BJ (cell line): ENCODE measurements at regions of chr11 and their contacts with region 1.

Region 1: GRCh38 chr11:10405855-10406592 is 49.0 kb upstream of the AMPD3 start:
- DNase-seq: no peak
- H3K4me3 ChIP-seq: no peak overlapping the region
- H3K27me3 ChIP-seq: no peaks in the 10 kb centered on the region
- CTCF ChIP-seq: peak; percentile 72

Region 2: GRCh38 chr11:10181811-10182210 is 224.2 kb before region 1 on chr11:
- CTCF ChIA-PET with region 1: no interaction called
- POLR2A ChIA-PET with region 1: interaction called, 18 read pairs
- DNase-seq: peak; percentile 35
- H3K4me3 ChIP-seq: no peak overlapping the region
- H3K27me3 ChIP-seq: no peaks in the 10 kb centered on the region
- CTCF ChIP-seq: peak; percentile 21; the same call in 1 of the 2 replicates

Region 3: DNA sequence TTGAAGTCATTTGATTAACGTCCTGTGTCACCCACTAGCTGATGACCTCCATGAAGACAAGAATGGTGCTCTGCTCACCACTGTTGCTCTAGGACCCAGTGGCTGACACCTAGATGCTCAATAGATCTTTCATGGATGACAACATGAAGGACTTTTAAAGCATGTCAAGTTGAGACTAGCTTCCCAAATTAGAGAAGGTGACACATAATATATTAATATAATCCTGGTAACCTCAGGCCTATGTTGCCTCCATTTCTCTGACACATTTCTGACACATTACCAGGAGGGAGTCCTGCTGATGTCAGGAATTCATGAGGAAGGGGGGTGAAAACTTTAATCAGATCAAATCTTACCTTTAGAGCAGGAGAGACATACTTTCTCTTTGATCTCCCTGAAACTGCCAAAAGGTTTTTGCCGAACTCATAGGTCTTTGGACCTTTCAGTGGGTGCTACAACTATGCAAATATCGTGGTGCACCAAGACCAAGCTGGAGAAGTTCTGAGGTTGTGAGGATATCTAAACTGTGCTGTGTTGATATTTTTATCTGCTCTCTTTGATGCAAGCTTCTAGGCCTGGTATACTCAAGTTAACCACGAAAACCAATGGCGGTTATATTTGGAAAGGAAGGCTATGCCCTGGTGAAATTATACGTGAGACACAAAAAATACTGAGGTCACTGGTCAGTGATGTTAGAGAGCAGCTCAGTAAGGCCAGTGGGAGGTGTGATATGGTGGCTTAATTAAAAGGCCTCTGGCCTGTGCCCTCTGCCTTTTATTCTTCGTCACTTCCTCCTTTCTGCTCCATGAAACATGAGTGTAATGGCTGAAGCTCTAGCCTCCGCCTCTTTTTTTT is 35.9 kb after region 1 on chr11:
- CTCF ChIA-PET with region 1: no interaction called
- POLR2A ChIA-PET with region 1: no interaction called
- DNase-seq: no peak
- H3K4me3 ChIP-seq: no peak overlapping the region
- H3K27me3 ChIP-seq: no peaks in the 10 kb centered on the region
- CTCF ChIP-seq: no peak

Region 4: DNA sequence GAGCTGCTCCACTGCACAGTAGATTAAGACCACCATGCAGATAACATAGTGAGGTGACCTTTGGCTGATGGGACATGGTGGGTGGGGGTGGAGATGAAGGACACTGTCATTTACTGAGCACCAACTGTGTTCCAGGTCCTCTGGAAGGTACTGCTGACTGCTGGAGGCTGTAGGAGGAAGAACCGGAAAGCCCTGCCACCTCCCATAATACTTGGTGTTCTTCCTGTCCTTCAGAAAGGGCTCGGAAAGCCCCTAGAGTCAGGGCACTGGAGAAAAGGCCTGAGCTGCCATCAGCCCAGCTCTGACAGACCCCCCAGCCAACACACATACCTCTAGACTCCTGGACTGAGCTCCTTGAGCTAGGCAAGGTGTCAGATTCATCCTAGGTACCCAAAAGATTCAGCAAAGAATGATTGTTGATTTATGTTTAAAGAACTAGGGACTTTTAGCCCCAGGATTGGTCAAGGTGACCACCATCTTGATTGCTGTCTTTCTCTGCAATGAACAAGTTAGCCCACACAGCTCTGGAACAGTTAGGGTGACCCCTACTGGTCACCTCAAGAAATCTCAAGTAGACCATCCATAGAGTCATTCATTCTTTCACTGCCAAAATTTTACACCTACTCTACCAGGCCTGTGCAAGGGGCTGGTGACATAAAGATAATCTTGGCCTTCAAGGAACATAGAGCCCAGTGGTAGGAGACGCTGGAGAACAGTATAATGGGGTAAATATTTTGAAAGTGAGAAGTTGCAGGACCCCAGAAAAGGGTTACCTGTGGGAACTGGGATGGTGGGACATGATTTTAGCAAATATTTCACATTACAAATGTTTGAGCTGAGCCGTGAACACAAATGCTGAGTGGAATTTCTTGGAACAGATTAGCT is 248.1 kb after region 1 on chr11:
- CTCF ChIA-PET with region 1: interaction called, 10 read pairs
- POLR2A ChIA-PET with region 1: no interaction called
- DNase-seq: no peak
- H3K4me3 ChIP-seq: no peak overlapping the region
- H3K27me3 ChIP-seq: no peaks in the 10 kb centered on the region
- CTCF ChIP-seq: peak; percentile 60